PC-9 (cell line): ENCODE measurements at regions of chr12 and their contacts with region 1.

Region 1: GRCh38 chr12:51238510-51239334 is at the start of gene DAZAP2:
- DNase-seq: peak; percentile 89 to 94
- H3K4me3 ChIP-seq: peak within 1 kb of the TSS; percentile 94
- H3K27ac ChIP-seq: peak within 1 kb of the TSS; percentile 97
- H3K4me1 ChIP-seq: peaks cover 20% of the 10 kb centered on the region
- H3K27me3 ChIP-seq: no peaks in the 10 kb centered on the region
- CTCF ChIP-seq: no peak
- total RNA-seq, gene DAZAP2: 84.4 and 154 TPM in 2 replicates

Region 2: GRCh38 chr12:51083126-51083833 is 155.4 kb before region 1 on chr12 and contains the start of gene CSRNP2:
- CTCF ChIA-PET with region 1: no interaction called
- POLR2A ChIA-PET with region 1: interaction called, 27 read pairs
- intact Hi-C with region 1: no loop called
- DNase-seq: peak; percentile 89 to 96
- H3K4me3 ChIP-seq: peak within 1 kb of the TSS; percentile 84
- H3K27ac ChIP-seq: peak within 1 kb of the TSS; percentile 30
- H3K4me1 ChIP-seq: peaks cover 8% of the 10 kb centered on the region
- H3K27me3 ChIP-seq: no peaks in the 10 kb centered on the region
- CTCF ChIP-seq: no peak
- total RNA-seq, gene CSRNP2: 19.3 and 23.1 TPM in 2 replicates

Region 3: GRCh38 chr12:51172515-51173431 is 65.9 kb before region 1 on chr12 and contains the start of gene TFCP2:
- CTCF ChIA-PET with region 1: no interaction called
- POLR2A ChIA-PET with region 1: interaction called, 6 read pairs
- intact Hi-C with region 1: loop called (anchors 2 kb)
- DNase-seq: peak; percentile 89 to 95
- H3K4me3 ChIP-seq: peak within 1 kb of the TSS; percentile 87
- H3K27ac ChIP-seq: peak within 1 kb of the TSS; percentile 98
- H3K4me1 ChIP-seq: peaks cover 20% of the 10 kb centered on the region
- H3K27me3 ChIP-seq: no peaks in the 10 kb centered on the region
- CTCF ChIP-seq: no peak
- total RNA-seq, gene TFCP2: 17.1 and 25.7 TPM in 2 replicates

Region 4: DNA sequence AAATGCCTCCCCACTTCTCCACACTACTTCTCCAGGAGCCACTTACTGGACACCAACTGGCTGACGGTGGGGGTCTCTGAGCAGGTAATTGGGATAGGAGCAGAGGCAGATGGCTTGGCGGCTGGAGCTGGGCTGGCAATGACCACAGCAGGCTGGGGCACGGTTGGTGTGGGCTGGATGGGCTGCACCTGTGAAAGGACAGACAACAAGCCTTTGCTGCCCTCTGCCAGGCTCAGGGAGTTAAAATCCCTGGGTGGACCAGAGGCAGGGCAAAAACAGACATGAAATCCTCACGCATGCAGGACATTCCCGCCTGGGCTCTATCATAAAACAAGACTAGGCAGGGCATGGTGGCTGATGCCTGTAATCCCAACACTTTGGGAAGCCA is 46.4 kb before region 1 on chr12:
- CTCF ChIA-PET with region 1: no interaction called
- POLR2A ChIA-PET with region 1: no interaction called
- intact Hi-C with region 1: no loop called
- DNase-seq: no peak
- H3K4me3 ChIP-seq: no peak overlapping the region
- H3K27ac ChIP-seq: no peak overlapping the region
- H3K4me1 ChIP-seq: no peaks in the 10 kb centered on the region
- H3K27me3 ChIP-seq: no peaks in the 10 kb centered on the region
- CTCF ChIP-seq: no peak

Region 5: GRCh38 chr12:51262758-51263177 is 24.0 kb after region 1 on chr12:
- CTCF ChIA-PET with region 1: interaction called, 10 read pairs
- POLR2A ChIA-PET with region 1: no interaction called
- intact Hi-C with region 1: no loop called
- DNase-seq: peak in 1 of 2 experiments; percentile 41
- H3K4me3 ChIP-seq: no peak overlapping the region
- H3K27ac ChIP-seq: no peak overlapping the region
- H3K4me1 ChIP-seq: peaks cover 13% of the 10 kb centered on the region; the same call in 1 of the 2 replicates
- H3K27me3 ChIP-seq: no peaks in the 10 kb centered on the region
- CTCF ChIP-seq: peak; percentile 45